HepG2 (cell line): ENCODE measurements at regions of chr9 and their contacts with region 1.

Region 1: GRCh38 chr9:107484117-107484723 is 5.3 kb downstream of the KLF4 start:
- DNase-seq: peak; percentile 68
- ATAC-seq: peak; percentile 82
- H3K4me3 ChIP-seq: no peak overlapping the region
- H3K27ac ChIP-seq: no peak overlapping the region
- H3K4me1 ChIP-seq: no peaks in the 10 kb centered on the region
- H3K27me3 ChIP-seq: peaks cover 0 to 13% of the 10 kb centered on the region in 2 experiments; a peak in 3 of 5 replicates
- CTCF ChIP-seq: peak; percentile 72
- EP300 ChIP-seq: no peak
- POLR2A ChIP-seq: no peak
- RAD21 ChIP-seq: peak; percentile 48; the same call in 1 of the 2 replicates

Region 2: GRCh38 chr9:107087222-107087621 is 397.0 kb before region 1 on chr9:
- CTCF ChIA-PET with region 1: no interaction called
- POLR2A ChIA-PET with region 1: no interaction called
- in situ Hi-C with region 1: no loop called
- intact Hi-C with region 1: no loop called
- DNase-seq: no peak
- ATAC-seq: no peak
- H3K4me3 ChIP-seq: no peak overlapping the region
- H3K27ac ChIP-seq: no peak overlapping the region
- H3K4me1 ChIP-seq: no peaks in the 10 kb centered on the region
- H3K27me3 ChIP-seq: no peaks in the 10 kb centered on the region; a peak in 1 of 5 replicates
- CTCF ChIP-seq: no peak
- EP300 ChIP-seq: no peak
- POLR2A ChIP-seq: no peak
- RAD21 ChIP-seq: no peak

Region 3: GRCh38 chr9:108813951-108814601 is 1329.9 kb after region 1 on chr9:
- CTCF ChIA-PET with region 1: no interaction called
- POLR2A ChIA-PET with region 1: no interaction called
- in situ Hi-C with region 1: loop called (anchors 25 kb)
- intact Hi-C with region 1: loop called (anchors 5 kb)
- DNase-seq: peak; percentile 58
- ATAC-seq: peak; percentile 74
- H3K4me3 ChIP-seq: no peak overlapping the region
- H3K27ac ChIP-seq: no peak overlapping the region
- H3K4me1 ChIP-seq: peaks cover 62% of the 10 kb centered on the region
- H3K27me3 ChIP-seq: no peaks in the 10 kb centered on the region
- CTCF ChIP-seq: peak; percentile 68
- EP300 ChIP-seq: no peak
- POLR2A ChIP-seq: no peak
- RAD21 ChIP-seq: peak; percentile 63; the same call in 1 of the 2 replicates